ENCODE measurements at regions of chr2 and their contacts with region 1.

Region 1: GRCh38 chr2:152036611-152037469 is 62.0 kb downstream of the CACNB4 start:
- DNase-seq: peak; percentile 45 to 73 (median 66)
- H3K4me3 ChIP-seq: no peak overlapping the region
- H3K4me3 Mint-ChIP-seq: no peak overlapping the region
- H3K27ac ChIP-seq: no peak overlapping the region
- H3K27ac Mint-ChIP-seq: peak overlapping the region in 1 of 7 donors; percentile 16
- H3K4me1 ChIP-seq: peaks cover 10 to 15% of the 10 kb centered on the region in 2 donors
- H3K4me1 Mint-ChIP-seq: peaks cover 12% of the 10 kb centered on the region
- H3K27me3 ChIP-seq: no peaks in the 10 kb centered on the region
- H3K27me3 Mint-ChIP-seq: peaks cover 0 to 2% (median 0%) of the 10 kb centered on the region in 3 donors
- CTCF ChIP-seq: peak; percentile 85

Region 2: DNA sequence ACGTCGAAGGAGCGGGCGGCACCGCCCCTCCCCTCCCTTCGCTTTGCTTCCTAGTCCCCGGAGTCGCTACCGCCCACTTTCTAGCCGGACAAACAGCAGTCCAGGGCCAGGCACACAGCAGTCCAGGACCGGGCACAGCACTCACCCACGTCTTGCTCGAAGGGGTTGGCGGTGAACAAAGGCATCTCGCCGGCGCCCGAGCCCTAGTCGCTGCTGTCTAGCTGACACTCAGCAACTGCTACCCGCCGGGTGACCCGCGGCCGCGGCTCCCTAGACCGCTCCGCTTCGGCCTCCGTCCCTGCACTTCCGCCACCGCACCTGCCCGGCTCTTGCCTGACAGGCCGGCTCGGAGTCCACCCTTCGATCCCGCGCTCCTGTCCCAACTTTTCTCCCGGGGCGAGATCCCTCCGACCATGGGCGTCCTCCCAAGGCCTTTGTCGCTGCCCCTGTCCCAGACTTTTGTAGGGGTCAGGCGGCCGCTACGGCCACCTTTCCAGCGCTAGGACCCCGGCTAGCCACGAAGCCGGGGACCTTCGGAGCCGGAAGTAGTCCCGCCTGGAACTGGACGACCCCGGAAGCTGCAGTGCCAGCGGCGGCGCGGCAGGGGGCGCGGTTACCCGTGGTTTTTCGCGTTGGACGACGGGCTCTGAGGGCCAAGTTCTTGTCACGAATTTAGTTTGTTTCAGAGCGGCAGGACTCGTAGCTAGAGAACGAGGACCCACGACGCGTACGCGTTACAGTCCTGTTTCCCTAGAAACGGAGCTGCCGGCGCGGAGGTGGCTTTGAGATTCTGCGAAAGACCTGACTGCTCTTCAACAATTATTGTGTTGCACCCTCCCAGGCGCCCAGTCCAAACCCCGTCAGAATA is 138.9 kb after region 1 on chr2 and contains the start of gene STAM2:
- intact Hi-C with region 1: loop called in 1 of 2 experiments (anchors 10 kb)
- DNase-seq: peak; percentile 89 to 92 (median 90)
- H3K4me3 ChIP-seq: peak within 1 kb of the TSS; percentile 70 to 95 (median 88)
- H3K4me3 Mint-ChIP-seq: peak within 1 kb of the TSS; percentile 93 to 96
- H3K27ac ChIP-seq: peak within 1 kb of the TSS; percentile 92 to 99
- H3K27ac Mint-ChIP-seq: peak within 1 kb of the TSS; percentile 99 to 100 (median 100)
- H3K4me1 ChIP-seq: peaks cover 29 to 33% of the 10 kb centered on the region in 2 donors
- H3K4me1 Mint-ChIP-seq: peaks cover 37% of the 10 kb centered on the region
- H3K27me3 ChIP-seq: no peaks in the 10 kb centered on the region
- H3K27me3 Mint-ChIP-seq: peaks cover 0 to 3% (median 2%) of the 10 kb centered on the region in 3 donors
- CTCF ChIP-seq: peak; percentile 95
- polyA plus RNA-seq, gene STAM2: 6.9 to 12.6 (median 8.2) TPM

Region 3: GRCh38 chr2:152319831-152320570 is 283.2 kb after region 1 on chr2:
- intact Hi-C with region 1: no loop called
- DNase-seq: peak in 2 of 3 donors; percentile 9 to 57
- H3K4me3 ChIP-seq: no peak overlapping the region
- H3K4me3 Mint-ChIP-seq: no peak overlapping the region
- H3K27ac ChIP-seq: no peak overlapping the region
- H3K27ac Mint-ChIP-seq: peak overlapping the region in 2 of 7 donors; percentile 12 to 48
- H3K4me1 ChIP-seq: peaks cover 0 to 4% of the 10 kb centered on the region in 2 donors
- H3K4me1 Mint-ChIP-seq: peaks cover 2% of the 10 kb centered on the region
- H3K27me3 ChIP-seq: no peaks in the 10 kb centered on the region
- H3K27me3 Mint-ChIP-seq: peaks cover 1 to 6% (median 4%) of the 10 kb centered on the region in 3 donors
- CTCF ChIP-seq: no peak

Region 4: DNA sequence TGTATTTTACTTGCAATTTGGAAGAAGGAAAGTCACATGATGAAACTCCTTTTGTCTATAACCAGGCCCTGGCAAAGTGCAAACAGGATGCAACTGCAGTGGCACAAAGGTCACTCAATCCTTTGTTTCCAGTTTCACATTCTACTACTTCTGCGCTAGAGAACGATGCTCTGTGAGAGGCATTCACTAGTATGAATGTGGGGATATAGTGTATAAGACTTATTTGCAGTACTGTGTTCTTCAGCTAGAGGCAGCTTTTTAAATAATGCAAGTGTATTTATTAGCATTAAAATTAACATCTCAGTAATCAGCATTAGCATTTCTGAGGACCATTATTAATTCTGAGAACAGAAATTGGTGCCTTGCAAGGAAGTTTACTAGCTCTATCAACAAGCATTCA is 611.5 kb after region 1 on chr2:
- intact Hi-C with region 1: loop called in 1 of 2 experiments (anchors 10 kb)
- DNase-seq: no peak
- H3K4me3 ChIP-seq: no peak overlapping the region
- H3K4me3 Mint-ChIP-seq: no peak overlapping the region
- H3K27ac ChIP-seq: no peak overlapping the region
- H3K27ac Mint-ChIP-seq: no peak overlapping the region
- H3K4me1 ChIP-seq: no peaks in the 10 kb centered on the region
- H3K4me1 Mint-ChIP-seq: no peaks in the 10 kb centered on the region
- H3K27me3 ChIP-seq: no peaks in the 10 kb centered on the region
- H3K27me3 Mint-ChIP-seq: peaks cover 0 to 3% (median 0%) of the 10 kb centered on the region in 3 donors
- CTCF ChIP-seq: no peak